WTC11 (cell line): ENCODE measurements at regions of chr17 and their contacts with region 1.

Region 1: GRCh38 chr17:82679586-82680465 is 18.7 kb downstream of the RAB40B start:
- DNase-seq: peak; percentile 50
- ATAC-seq: peak; percentile 86
- H3K4me3 Mint-ChIP-seq: no peak overlapping the region
- H3K27ac Mint-ChIP-seq: no peak overlapping the region
- H3K4me1 Mint-ChIP-seq: no peaks in the 10 kb centered on the region
- H3K27me3 Mint-ChIP-seq: no peaks in the 10 kb centered on the region; the same call in 1 of the 2 replicates
- CTCF ChIP-seq: no peak

Region 2: GRCh38 chr17:82690771-82691489 is 11.1 kb after region 1 on chr17:
- CTCF ChIA-PET with region 1: no interaction called
- POLR2A ChIA-PET with region 1: no interaction called
- DNase-seq: no peak
- ATAC-seq: no peak
- H3K4me3 Mint-ChIP-seq: no peak overlapping the region
- H3K27ac Mint-ChIP-seq: no peak overlapping the region
- H3K4me1 Mint-ChIP-seq: no peaks in the 10 kb centered on the region
- H3K27me3 Mint-ChIP-seq: peaks cover 18% of the 10 kb centered on the region
- CTCF ChIP-seq: no peak

Region 3: DNA sequence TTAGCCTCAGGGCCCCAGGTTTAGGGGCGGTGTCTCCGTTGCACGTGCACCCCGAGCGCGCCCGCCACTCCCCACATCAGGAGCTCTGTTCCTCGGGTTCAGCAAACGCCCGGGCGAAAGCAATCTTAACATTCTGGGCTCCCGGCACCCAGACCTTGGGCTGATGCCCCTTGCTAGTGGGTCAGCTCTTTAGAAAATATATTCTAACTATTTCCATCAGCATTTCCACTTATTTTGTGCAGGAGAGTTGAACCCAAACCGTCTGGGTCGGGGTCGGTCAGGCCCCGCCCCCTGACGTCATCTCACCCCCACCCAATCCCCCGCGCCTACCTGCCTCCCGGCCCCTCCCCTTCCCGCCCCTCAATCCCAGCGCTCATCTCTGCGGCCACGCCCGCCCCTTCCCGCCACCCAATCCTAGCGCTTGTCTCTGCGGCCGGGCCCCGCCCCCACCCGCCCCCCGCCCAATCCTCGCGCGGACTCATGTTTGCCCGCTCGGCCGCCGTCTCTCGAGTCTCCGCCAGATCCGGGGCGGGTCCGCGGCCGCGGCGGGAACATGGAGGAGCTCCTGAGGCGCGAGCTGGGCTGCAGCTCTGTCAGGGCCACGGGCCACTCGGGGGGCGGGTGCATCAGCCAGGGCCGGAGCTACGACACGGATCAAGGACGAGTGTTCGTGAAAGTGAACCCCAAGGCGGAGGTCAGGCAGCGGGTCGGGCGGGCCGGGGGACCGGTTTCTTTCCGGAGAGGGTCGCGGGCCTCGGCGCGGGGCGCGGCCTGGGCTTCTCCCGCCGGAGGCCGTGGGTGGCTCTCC is 36.6 kb after region 1 on chr17 and contains the start of gene FN3KRP:
- CTCF ChIA-PET with region 1: interaction called, 11 read pairs
- POLR2A ChIA-PET with region 1: interaction called, 4 read pairs
- DNase-seq: peak; percentile 94
- ATAC-seq: peak; percentile 88
- H3K4me3 Mint-ChIP-seq: peak within 1 kb of the TSS; percentile 89
- H3K27ac Mint-ChIP-seq: peak within 1 kb of the TSS; percentile 76
- H3K4me1 Mint-ChIP-seq: peaks cover 13% of the 10 kb centered on the region
- H3K27me3 Mint-ChIP-seq: peaks cover 28% of the 10 kb centered on the region
- CTCF ChIP-seq: no peak
- total RNA-seq, gene FN3KRP: 19.7 to 24.4 TPM (median 23.2 TPM) in 3 replicates

Region 4: DNA sequence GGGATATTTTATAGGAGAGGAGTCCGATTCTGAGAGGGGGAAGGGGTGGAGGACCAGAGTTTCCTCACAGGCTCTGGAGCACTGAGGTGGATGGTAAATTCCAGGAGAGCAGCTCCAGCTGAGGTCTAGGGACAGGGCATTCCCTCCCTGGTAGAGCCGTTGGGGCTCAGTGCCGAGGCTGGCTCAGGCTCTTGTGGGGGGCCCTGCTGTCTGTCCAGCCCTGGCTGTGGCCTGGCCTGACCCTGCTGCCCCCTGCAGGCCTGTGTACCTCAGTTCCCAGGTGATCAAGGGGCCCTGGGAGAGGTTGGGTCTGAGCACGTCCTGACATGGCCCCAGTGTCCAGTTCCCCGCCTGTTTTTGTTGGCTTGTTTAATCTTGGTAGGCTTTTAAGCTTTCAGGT is 143.2 kb after region 1 on chr17:
- CTCF ChIA-PET with region 1: no interaction called
- POLR2A ChIA-PET with region 1: no interaction called
- DNase-seq: peak; percentile 69
- ATAC-seq: peak; percentile 71
- H3K4me3 Mint-ChIP-seq: no peak overlapping the region
- H3K27ac Mint-ChIP-seq: no peak overlapping the region; the same call in 1 of the 2 replicates
- H3K4me1 Mint-ChIP-seq: peaks cover 40% of the 10 kb centered on the region
- H3K27me3 Mint-ChIP-seq: no peaks in the 10 kb centered on the region
- CTCF ChIP-seq: peak; percentile 21; the same call in 1 of the 2 replicates